Right ventricle myocardium superior (tissue), 1 donor: ENCODE measurements at regions of chr1 and their contacts with region 1.

Region 1: DNA sequence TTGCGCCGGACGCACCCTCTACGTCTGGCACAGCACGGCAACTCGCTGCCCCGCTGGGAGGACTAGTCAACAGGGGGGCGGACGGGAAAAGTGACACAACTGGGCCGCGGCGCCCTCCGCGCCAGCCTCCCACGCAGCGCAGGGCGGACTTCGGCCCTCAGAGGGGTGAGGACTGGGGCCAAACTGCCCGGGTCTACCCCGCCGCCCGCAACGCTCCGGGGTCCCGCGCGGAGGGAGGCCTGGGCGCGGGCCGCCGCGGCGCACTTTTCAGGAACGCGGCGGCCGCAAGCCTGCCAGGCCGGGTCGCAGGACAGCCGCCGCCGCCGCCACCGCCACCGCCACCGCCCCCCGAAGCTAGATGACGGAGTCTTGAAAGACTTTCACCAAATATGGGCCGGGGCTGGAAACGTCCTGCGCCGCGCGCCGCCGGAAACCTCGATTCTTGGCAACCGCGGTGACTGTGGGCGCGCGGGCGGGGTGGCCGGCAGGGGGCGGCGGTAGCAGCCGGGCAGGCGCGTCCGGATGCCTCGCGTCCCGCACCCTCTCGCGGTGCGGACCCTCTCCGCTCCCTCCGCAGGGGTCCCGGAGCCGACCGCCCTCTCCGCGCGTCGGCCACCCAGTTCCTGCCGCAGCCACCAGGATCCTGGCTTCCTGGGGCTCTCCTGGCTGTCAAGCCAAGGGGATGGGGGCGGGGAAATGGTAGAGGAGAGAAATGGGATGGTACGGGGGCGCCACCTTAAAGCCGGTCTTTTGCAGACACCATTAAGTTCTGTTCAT is 3.7 kb upstream of the CCN1 start:
- DNase-seq: peak; percentile 91
- ATAC-seq: peak; percentile 73

Region 2: GRCh38 chr1:85356130-85356529 is 220.7 kb before region 1 on chr1:
- intact Hi-C with region 1: no loop called
- DNase-seq: no peak
- ATAC-seq: no peak

Region 3: GRCh38 chr1:85692730-85693314 is 116.0 kb after region 1 on chr1:
- intact Hi-C with region 1: loop called (anchors 5 kb)
- DNase-seq: no peak
- ATAC-seq: peak; percentile 64